ENCODE measurements at regions of chr15 and their contacts with region 1.

Region 1: GRCh38 chr15:48861813-48862431 is 16.0 kb upstream of the EID1 start:
- DNase-seq: peak; percentile 58
- ATAC-seq: peak; percentile 78
- H3K4me3 ChIP-seq: no peak overlapping the region
- H3K27ac ChIP-seq: no peak overlapping the region
- H3K4me1 ChIP-seq: no peaks in the 10 kb centered on the region
- H3K27me3 ChIP-seq: no peaks in the 10 kb centered on the region
- CTCF ChIP-seq: peak; percentile 79 to 92 (median 83); a peak in 5 of 6 replicates
- POLR2A ChIP-seq: no peak
- RAD21 ChIP-seq: peak; percentile 93

Region 2: GRCh38 chr15:48222627-48223026 is 639.3 kb before region 1 on chr15:
- CTCF ChIA-PET with region 1: no interaction called
- POLR2A ChIA-PET with region 1: no interaction called
- RAD21 ChIA-PET with region 1: no interaction called
- intact Hi-C with region 1: no loop called
- DNase-seq: no peak
- ATAC-seq: no peak
- H3K4me3 ChIP-seq: no peak overlapping the region
- H3K27ac ChIP-seq: no peak overlapping the region
- H3K4me1 ChIP-seq: no peaks in the 10 kb centered on the region
- H3K27me3 ChIP-seq: peaks cover 31% of the 10 kb centered on the region
- CTCF ChIP-seq: no peak
- POLR2A ChIP-seq: no peak
- RAD21 ChIP-seq: no peak

Region 3: GRCh38 chr15:48925714-48926223 is 63.8 kb after region 1 on chr15:
- CTCF ChIA-PET with region 1: no interaction called
- POLR2A ChIA-PET with region 1: no interaction called
- RAD21 ChIA-PET with region 1: no interaction called
- intact Hi-C with region 1: no loop called
- DNase-seq: peak; percentile 91
- ATAC-seq: peak; percentile 90
- H3K4me3 ChIP-seq: no peak overlapping the region
- H3K27ac ChIP-seq: no peak overlapping the region
- H3K4me1 ChIP-seq: peaks cover 7 to 14% of the 10 kb centered on the region in 2 experiments; a peak in 2 of 4 replicates
- H3K27me3 ChIP-seq: no peaks in the 10 kb centered on the region
- CTCF ChIP-seq: no peak
- POLR2A ChIP-seq: no peak
- RAD21 ChIP-seq: no peak

Region 4: GRCh38 chr15:48963524-48964113 is 101.7 kb after region 1 on chr15 and contains the start of gene SHC4:
- CTCF ChIA-PET with region 1: interaction called, 46 read pairs
- POLR2A ChIA-PET with region 1: no interaction called
- RAD21 ChIA-PET with region 1: interaction called in 1 of 2 experiments, 4 read pairs
- intact Hi-C with region 1: loop called (anchors 1 kb)
- DNase-seq: no peak
- ATAC-seq: peak; percentile 82
- H3K4me3 ChIP-seq: peak within 1 kb of the TSS; percentile 48 to 60
- H3K27ac ChIP-seq: no peak within 1 kb of the TSS; the same call in 1 of the 2 replicates
- H3K4me1 ChIP-seq: peaks cover 4 to 18% of the 10 kb centered on the region in 2 experiments; a peak in 3 of 4 replicates
- H3K27me3 ChIP-seq: no peaks in the 10 kb centered on the region
- CTCF ChIP-seq: peak; percentile 1 to 25 (median 20); a peak in 2 of 6 replicates
- POLR2A ChIP-seq: no peak
- RAD21 ChIP-seq: no peak; the same call in 1 of the 2 replicates
- total RNA-seq, gene SHC4: 0.44 TPM

Region 5: GRCh38 chr15:49145651-49146609 is 284.0 kb after region 1 on chr15:
- CTCF ChIA-PET with region 1: interaction called, 26 read pairs
- POLR2A ChIA-PET with region 1: no interaction called
- RAD21 ChIA-PET with region 1: no interaction called
- intact Hi-C with region 1: loop called (anchors 1 kb)
- DNase-seq: peak; percentile 35
- ATAC-seq: peak; percentile 64
- H3K4me3 ChIP-seq: no peak overlapping the region
- H3K27ac ChIP-seq: no peak overlapping the region
- H3K4me1 ChIP-seq: no peaks in the 10 kb centered on the region
- H3K27me3 ChIP-seq: no peaks in the 10 kb centered on the region
- CTCF ChIP-seq: peak; percentile 37 to 81 (median 65); a peak in 5 of 6 replicates
- POLR2A ChIP-seq: no peak
- RAD21 ChIP-seq: peak; percentile 56

Region 6: DNA sequence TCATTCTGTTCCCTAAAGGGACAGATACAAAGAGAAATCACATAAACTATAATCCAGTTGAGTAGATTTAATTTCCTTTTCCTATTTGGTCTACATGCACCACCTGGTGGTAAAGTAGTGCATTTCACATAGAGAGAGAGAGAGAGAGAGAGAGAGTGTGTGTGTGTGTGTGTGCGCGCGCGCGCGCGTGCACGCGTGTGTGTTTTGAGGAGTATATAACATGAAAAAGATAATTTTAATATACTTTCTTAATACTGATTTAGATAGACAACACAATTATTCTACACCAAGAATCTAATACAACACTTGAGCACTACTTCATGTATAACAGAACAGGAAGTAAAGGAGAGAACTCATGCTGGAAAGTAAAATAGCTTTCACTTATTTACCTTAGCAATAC is 560.1 kb after region 1 on chr15:
- CTCF ChIA-PET with region 1: interaction called, 24 read pairs
- POLR2A ChIA-PET with region 1: no interaction called
- RAD21 ChIA-PET with region 1: no interaction called
- intact Hi-C with region 1: loop called (anchors 1 kb)
- DNase-seq: peak; percentile 54
- ATAC-seq: peak; percentile 65
- H3K4me3 ChIP-seq: no peak overlapping the region
- H3K27ac ChIP-seq: no peak overlapping the region
- H3K4me1 ChIP-seq: no peaks in the 10 kb centered on the region
- H3K27me3 ChIP-seq: no peaks in the 10 kb centered on the region
- CTCF ChIP-seq: peak; percentile 68 to 77 (median 70)
- POLR2A ChIP-seq: no peak
- RAD21 ChIP-seq: peak; percentile 68

Region 7: GRCh38 chr15:50003786-50004334 is 1141.9 kb after region 1 on chr15:
- CTCF ChIA-PET with region 1: no interaction called
- POLR2A ChIA-PET with region 1: no interaction called
- RAD21 ChIA-PET with region 1: no interaction called
- intact Hi-C with region 1: loop called (anchors 2 kb)
- DNase-seq: peak; percentile 80
- ATAC-seq: peak; percentile 100
- H3K4me3 ChIP-seq: no peak overlapping the region
- H3K27ac ChIP-seq: no peak overlapping the region
- H3K4me1 ChIP-seq: peaks cover 2 to 5% of the 10 kb centered on the region in 2 experiments; a peak in 3 of 4 replicates
- H3K27me3 ChIP-seq: no peaks in the 10 kb centered on the region
- CTCF ChIP-seq: peak; percentile 38 to 89 (median 84); a peak in 5 of 6 replicates
- POLR2A ChIP-seq: no peak
- RAD21 ChIP-seq: peak; percentile 77

Region 8: GRCh38 chr15:50145451-50145872 is 1283.5 kb after region 1 on chr15:
- CTCF ChIA-PET with region 1: interaction called, 8 read pairs
- POLR2A ChIA-PET with region 1: no interaction called
- RAD21 ChIA-PET with region 1: interaction called, 3 to 4 read pairs
- intact Hi-C with region 1: loop called (anchors 2 kb)
- DNase-seq: peak; percentile 71
- ATAC-seq: peak; percentile 81
- H3K4me3 ChIP-seq: no peak overlapping the region
- H3K27ac ChIP-seq: no peak overlapping the region
- H3K4me1 ChIP-seq: peaks cover 2 to 23% of the 10 kb centered on the region in 2 experiments; a peak in 3 of 4 replicates
- H3K27me3 ChIP-seq: no peaks in the 10 kb centered on the region
- CTCF ChIP-seq: peak; percentile 17 to 61 (median 51); a peak in 3 of 6 replicates
- POLR2A ChIP-seq: no peak
- RAD21 ChIP-seq: peak; percentile 75